ENCODE measurements at regions of chr20 and their contacts with region 1.

Region 1: GRCh38 chr20:2261105-2261504 is 34.7 kb upstream of the TGM3 start:
- DNase-seq: no peak
- ATAC-seq: no peak
- H3K4me3 ChIP-seq: no peak overlapping the region
- H3K27ac ChIP-seq: no peak overlapping the region
- H3K4me1 ChIP-seq: no peaks in the 10 kb centered on the region; a peak in 1 of 5 replicates
- H3K27me3 ChIP-seq: peaks cover 0 to 4% of the 10 kb centered on the region in 2 experiments; a peak in 1 of 5 replicates
- CTCF ChIP-seq: no peak
- EP300 ChIP-seq: no peak
- POLR2A ChIP-seq: no peak
- RAD21 ChIP-seq: no peak

Region 2: DNA sequence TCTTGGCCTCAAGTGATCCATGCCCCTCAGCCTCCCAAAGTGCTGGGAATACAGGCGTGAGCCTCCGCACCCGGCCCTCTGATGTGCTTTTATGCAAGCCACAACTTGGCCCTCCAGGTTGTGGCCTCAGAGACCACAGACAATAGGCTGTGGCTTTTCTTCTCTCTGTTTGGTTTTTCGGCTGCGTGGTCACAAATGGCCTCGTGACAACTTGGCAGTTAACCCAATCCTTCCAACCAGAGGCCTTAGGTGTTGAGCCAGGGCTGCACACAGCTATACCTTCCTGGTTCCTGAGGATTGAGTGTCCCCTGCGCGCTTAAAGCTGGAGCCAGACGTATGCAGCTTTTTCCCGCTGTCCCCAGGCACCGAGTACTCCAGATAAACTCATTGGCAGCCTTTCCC is 28.4 kb after region 1 on chr20:
- CTCF ChIA-PET with region 1: no interaction called
- POLR2A ChIA-PET with region 1: no interaction called
- in situ Hi-C with region 1: no loop called
- intact Hi-C with region 1: no loop called
- DNase-seq: no peak
- ATAC-seq: no peak
- H3K4me3 ChIP-seq: no peak overlapping the region
- H3K27ac ChIP-seq: no peak overlapping the region
- H3K4me1 ChIP-seq: peaks cover 5 to 10% of the 10 kb centered on the region in 2 experiments; a peak in 2 of 5 replicates
- H3K27me3 ChIP-seq: 0 out of 5 replicates have a peak, but pooled peaks cover 0 to 3% of the 10 kb centered on the region in 2 experiments
- CTCF ChIP-seq: no peak
- EP300 ChIP-seq: no peak
- POLR2A ChIP-seq: no peak
- RAD21 ChIP-seq: no peak

Region 3: GRCh38 chr20:2314759-2315439 is 53.8 kb after region 1 on chr20:
- CTCF ChIA-PET with region 1: no interaction called
- POLR2A ChIA-PET with region 1: no interaction called
- in situ Hi-C with region 1: no loop called
- intact Hi-C with region 1: no loop called
- DNase-seq: peak; percentile 83 to 95 (median 88)
- ATAC-seq: peak; percentile 98
- H3K4me3 ChIP-seq: no peak overlapping the region
- H3K27ac ChIP-seq: peak overlapping the region; percentile 92
- H3K4me1 ChIP-seq: peaks cover 25 to 32% of the 10 kb centered on the region in 2 experiments
- H3K27me3 ChIP-seq: no peaks in the 10 kb centered on the region
- CTCF ChIP-seq: no peak
- EP300 ChIP-seq: peak; percentile 75
- POLR2A ChIP-seq: peak; percentile 72
- RAD21 ChIP-seq: peak in 1 of 2 experiments; percentile 19; a peak in 2 of 4 replicates

Region 4: DNA sequence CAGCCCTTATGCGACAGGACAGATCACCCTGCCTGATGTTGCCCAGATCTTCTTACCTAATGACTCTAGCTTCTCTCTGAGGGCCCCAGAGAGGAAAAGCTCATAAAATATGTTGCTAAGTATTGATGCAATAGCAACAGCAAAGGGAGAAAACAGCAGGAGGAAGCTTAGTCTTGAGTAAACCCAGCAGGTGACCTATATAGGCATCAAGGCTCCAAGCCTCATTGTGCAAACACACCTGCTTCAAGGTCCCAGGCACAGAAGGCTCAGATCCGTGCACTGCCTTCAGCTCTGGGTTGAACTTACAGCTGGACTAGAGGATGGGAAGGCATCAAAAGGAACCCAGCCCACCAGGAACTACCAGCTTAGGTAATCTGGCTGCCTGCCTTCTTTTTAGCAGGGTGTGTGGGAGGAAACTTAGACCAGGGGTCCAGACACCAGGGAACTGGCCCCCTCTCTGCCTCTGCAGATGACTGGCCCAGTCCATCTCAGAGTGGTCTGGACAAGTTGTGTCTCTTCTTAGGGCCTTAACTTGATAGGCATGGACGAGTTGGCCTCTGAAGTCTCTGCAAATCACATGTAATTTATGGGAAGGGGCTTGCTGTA is 69.1 kb after region 1 on chr20:
- CTCF ChIA-PET with region 1: no interaction called
- POLR2A ChIA-PET with region 1: no interaction called
- in situ Hi-C with region 1: no loop called
- intact Hi-C with region 1: loop called (anchors 10 kb)
- DNase-seq: no peak
- ATAC-seq: no peak
- H3K4me3 ChIP-seq: no peak overlapping the region
- H3K27ac ChIP-seq: no peak overlapping the region
- H3K4me1 ChIP-seq: no peaks in the 10 kb centered on the region
- H3K27me3 ChIP-seq: peaks cover 8 to 58% of the 10 kb centered on the region in 2 experiments
- CTCF ChIP-seq: no peak
- EP300 ChIP-seq: no peak
- POLR2A ChIP-seq: no peak
- RAD21 ChIP-seq: no peak